HCT116 (cell line): ENCODE measurements at regions of chr6 and their contacts with region 1.

Region 1: GRCh38 chr6:56938649-56939191 is 16.2 kb upstream of the BEND6 start:
- DNase-seq: peak; percentile 100
- ATAC-seq: peak; percentile 93
- H3K4me3 ChIP-seq: peak overlapping the region in 1 of 2 experiments; percentile 42; a peak in 2 of 4 replicates
- H3K27ac ChIP-seq: peak overlapping the region; percentile 90
- H3K4me1 ChIP-seq: peaks cover 42 to 58% of the 10 kb centered on the region in 2 experiments
- H3K27me3 ChIP-seq: no peaks in the 10 kb centered on the region
- CTCF ChIP-seq: no peak
- POLR2A ChIP-seq: no peak
- RAD21 ChIP-seq: peak; percentile 22

Region 2: GRCh38 chr6:56708810-56709597 is 229.7 kb before region 1 on chr6:
- CTCF ChIA-PET with region 1: no interaction called
- POLR2A ChIA-PET with region 1: no interaction called
- RAD21 ChIA-PET with region 1: no interaction called
- intact Hi-C with region 1: loop called (anchors 5 kb)
- DNase-seq: peak; percentile 66
- ATAC-seq: no peak
- H3K4me3 ChIP-seq: no peak overlapping the region; a peak in 1 of 4 replicates
- H3K27ac ChIP-seq: peak overlapping the region; percentile 74
- H3K4me1 ChIP-seq: peaks cover 54 to 83% of the 10 kb centered on the region in 2 experiments
- H3K27me3 ChIP-seq: no peaks in the 10 kb centered on the region
- CTCF ChIP-seq: peak; percentile 43 to 67 (median 64); a peak in 5 of 6 replicates
- POLR2A ChIP-seq: no peak
- RAD21 ChIP-seq: peak; percentile 71

Region 3: DNA sequence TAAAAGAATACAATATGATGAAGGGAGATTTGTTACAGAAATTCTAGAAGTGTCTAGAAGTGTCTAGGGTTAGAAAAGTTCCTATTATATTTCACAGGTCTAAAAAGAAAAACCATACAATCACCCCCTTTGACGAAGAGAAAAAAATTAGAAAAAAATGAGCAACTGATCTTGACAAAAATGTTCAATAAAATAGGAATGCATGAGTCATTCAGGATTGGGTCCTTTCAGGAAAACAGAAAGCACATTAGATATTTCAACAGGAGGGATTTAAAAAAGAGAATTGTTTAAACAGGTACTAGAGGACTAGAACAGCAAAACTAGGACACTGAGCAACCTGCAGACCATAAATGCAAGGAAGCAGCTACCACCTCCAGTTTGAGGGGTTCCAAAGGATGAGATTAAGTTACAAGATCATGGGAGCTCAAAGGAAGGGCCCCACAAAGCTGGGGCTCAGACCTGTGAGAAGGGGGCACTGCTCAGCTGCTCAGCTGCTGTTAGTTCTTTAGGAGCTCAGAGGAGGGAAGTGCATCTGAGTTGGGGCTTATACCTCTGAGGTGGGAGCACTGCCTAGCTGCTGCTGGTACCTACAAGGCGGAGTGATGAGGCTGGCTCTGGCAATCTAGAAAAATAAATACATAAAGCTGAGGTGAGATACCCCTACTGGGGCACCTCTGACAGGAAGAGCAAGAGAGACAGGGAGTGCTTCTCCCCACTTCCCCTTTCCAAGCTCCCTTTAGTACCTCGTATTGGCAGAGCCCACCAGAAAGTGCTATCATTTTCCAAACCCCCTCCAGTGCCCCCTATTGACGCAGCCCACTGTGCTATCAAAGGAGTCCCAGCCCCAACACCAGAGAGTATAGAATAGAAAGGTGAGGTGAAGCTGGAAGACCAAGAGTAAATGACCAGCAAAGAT is 10.9 kb before region 1 on chr6:
- CTCF ChIA-PET with region 1: interaction called, 5 read pairs
- POLR2A ChIA-PET with region 1: interaction called, 15 read pairs
- RAD21 ChIA-PET with region 1: interaction called in 1 of 2 experiments, 3 read pairs
- intact Hi-C with region 1: no loop called
- DNase-seq: no peak
- ATAC-seq: peak; percentile 71
- H3K4me3 ChIP-seq: no peak overlapping the region; a peak in 1 of 4 replicates
- H3K27ac ChIP-seq: peak overlapping the region; percentile 63
- H3K4me1 ChIP-seq: peaks cover 58 to 59% of the 10 kb centered on the region in 2 experiments
- H3K27me3 ChIP-seq: no peaks in the 10 kb centered on the region
- CTCF ChIP-seq: peak in 1 of 3 experiments; percentile 23; a peak in 1 of 6 replicates
- POLR2A ChIP-seq: no peak
- RAD21 ChIP-seq: no peak